ENCODE measurements at regions of chr4 and their contacts with region 1.

Region 1: GRCh38 chr4:101347557-101348366 is 436 bp upstream of the PPP3CA start:
- DNase-seq: peak; percentile 98
- ATAC-seq: peak; percentile 84
- H3K4me3 Mint-ChIP-seq: peak overlapping the region; percentile 95
- H3K27ac Mint-ChIP-seq: peak overlapping the region; percentile 93
- H3K4me1 Mint-ChIP-seq: peaks cover 18% of the 10 kb centered on the region
- H3K27me3 Mint-ChIP-seq: peaks cover 33% of the 10 kb centered on the region

Region 2: GRCh38 chr4:101328063-101328602 is 19.6 kb before region 1 on chr4:
- POLR2A ChIA-PET with region 1: interaction called, 16 read pairs
- DNase-seq: no peak
- ATAC-seq: peak; percentile 85
- H3K4me3 Mint-ChIP-seq: peak overlapping the region; percentile 79
- H3K27ac Mint-ChIP-seq: peak overlapping the region; percentile 87
- H3K4me1 Mint-ChIP-seq: peaks cover 19% of the 10 kb centered on the region
- H3K27me3 Mint-ChIP-seq: peaks cover 2% of the 10 kb centered on the region

Region 3: GRCh38 chr4:101370663-101371210 is 23.0 kb after region 1 on chr4:
- POLR2A ChIA-PET with region 1: no interaction called
- DNase-seq: no peak
- ATAC-seq: no peak
- H3K4me3 Mint-ChIP-seq: no peak overlapping the region
- H3K27ac Mint-ChIP-seq: no peak overlapping the region
- H3K4me1 Mint-ChIP-seq: peaks cover 2% of the 10 kb centered on the region
- H3K27me3 Mint-ChIP-seq: peaks cover 19% of the 10 kb centered on the region

Region 4: GRCh38 chr4:101419324-101420135 is 71.8 kb after region 1 on chr4:
- POLR2A ChIA-PET with region 1: interaction called, 26 read pairs
- DNase-seq: no peak
- ATAC-seq: peak; percentile 30
- H3K4me3 Mint-ChIP-seq: peak overlapping the region; percentile 9
- H3K27ac Mint-ChIP-seq: no peak overlapping the region
- H3K4me1 Mint-ChIP-seq: peaks cover 32% of the 10 kb centered on the region
- H3K27me3 Mint-ChIP-seq: peaks cover 9% of the 10 kb centered on the region

Region 5: GRCh38 chr4:101774807-101775206 is 427.0 kb after region 1 on chr4:
- POLR2A ChIA-PET with region 1: no interaction called
- DNase-seq: no peak
- ATAC-seq: no peak
- H3K4me3 Mint-ChIP-seq: no peak overlapping the region
- H3K27ac Mint-ChIP-seq: no peak overlapping the region
- H3K4me1 Mint-ChIP-seq: no peaks in the 10 kb centered on the region
- H3K27me3 Mint-ChIP-seq: peaks cover 16% of the 10 kb centered on the region